SK-N-SH (cell line): ENCODE measurements at regions of chr1 and their contacts with region 1.

Region 1: GRCh38 chr1:153510984-153511410 is 24.8 kb downstream of the S100A6 start:
- DNase-seq: peak; percentile 89
- H3K4me3 ChIP-seq: no peak overlapping the region; a peak in 1 of 4 replicates
- H3K27ac ChIP-seq: peak overlapping the region in 1 of 2 experiments; percentile 9; a peak in 1 of 4 replicates
- H3K4me1 ChIP-seq: peaks cover 4 to 20% of the 10 kb centered on the region in 2 experiments; a peak in 3 of 4 replicates
- H3K27me3 ChIP-seq: no peaks in the 10 kb centered on the region
- CTCF ChIP-seq: peak; percentile 95
- EP300 ChIP-seq: no peak
- RAD21 ChIP-seq: peak; percentile 96

Region 2: GRCh38 chr1:153352523-153352922 is 158.5 kb before region 1 on chr1:
- CTCF ChIA-PET with region 1: interaction called, 10 read pairs
- POLR2A ChIA-PET with region 1: no interaction called
- DNase-seq: peak; percentile 77
- H3K4me3 ChIP-seq: no peak overlapping the region; a peak in 1 of 4 replicates
- H3K27ac ChIP-seq: no peak overlapping the region
- H3K4me1 ChIP-seq: no peaks in the 10 kb centered on the region
- H3K27me3 ChIP-seq: peaks cover 64% of the 10 kb centered on the region; the same call in 1 of the 2 replicates
- CTCF ChIP-seq: peak; percentile 93
- EP300 ChIP-seq: no peak
- RAD21 ChIP-seq: peak; percentile 92

Region 3: DNA sequence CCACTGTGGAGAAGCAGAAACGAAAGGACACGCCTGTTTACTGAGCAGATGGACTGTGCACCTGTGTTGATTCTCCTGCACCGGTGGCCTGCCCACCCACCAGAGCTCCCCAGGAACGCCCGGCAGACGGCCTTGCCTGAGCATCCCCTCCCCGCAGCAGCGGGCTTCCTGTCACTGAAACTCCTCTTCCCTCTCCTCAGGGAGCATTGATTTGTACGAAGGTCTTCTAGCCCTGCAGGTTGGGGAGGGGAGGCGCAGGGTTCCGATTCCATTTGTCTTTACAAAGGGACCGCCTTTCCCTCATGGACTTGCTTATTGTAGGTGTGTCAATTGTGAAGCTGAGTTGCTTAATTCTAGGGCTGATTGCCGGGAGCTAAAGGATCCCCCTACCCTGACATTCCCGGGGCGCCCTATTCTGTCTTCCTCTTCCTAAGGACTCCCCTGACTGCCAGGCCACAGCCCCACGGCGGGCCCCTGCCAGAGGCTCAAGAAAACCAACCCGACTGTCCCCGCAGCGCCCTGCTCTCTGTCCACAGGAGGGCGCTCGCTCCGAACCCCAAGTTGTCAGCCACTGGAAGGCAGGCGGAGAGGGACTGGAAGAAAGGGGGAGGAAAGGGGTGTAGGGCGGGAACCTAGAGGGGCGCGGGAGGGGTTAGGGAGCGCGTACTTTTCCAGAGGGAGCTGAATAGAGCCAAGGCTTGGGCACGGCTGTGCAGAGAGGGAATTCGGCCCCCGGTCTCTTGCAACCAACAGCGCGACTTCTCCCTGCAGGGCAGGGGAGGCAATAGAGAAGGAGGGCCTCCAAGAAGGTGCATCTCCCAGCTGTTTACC is 22.0 kb after region 1 on chr1:
- CTCF ChIA-PET with region 1: interaction called, 45 read pairs
- POLR2A ChIA-PET with region 1: no interaction called
- DNase-seq: no peak
- H3K4me3 ChIP-seq: peak overlapping the region in 1 of 2 experiments; percentile 79; a peak in 3 of 4 replicates
- H3K27ac ChIP-seq: peak overlapping the region; percentile 1 to 87; a peak in 3 of 4 replicates
- H3K4me1 ChIP-seq: peaks cover 24 to 31% of the 10 kb centered on the region in 2 experiments; a peak in 3 of 4 replicates
- H3K27me3 ChIP-seq: no peaks in the 10 kb centered on the region
- CTCF ChIP-seq: peak; percentile 62
- EP300 ChIP-seq: no peak
- RAD21 ChIP-seq: 0 out of 2 replicates have a peak, but pooled peaks have one; percentile 9

Region 4: DNA sequence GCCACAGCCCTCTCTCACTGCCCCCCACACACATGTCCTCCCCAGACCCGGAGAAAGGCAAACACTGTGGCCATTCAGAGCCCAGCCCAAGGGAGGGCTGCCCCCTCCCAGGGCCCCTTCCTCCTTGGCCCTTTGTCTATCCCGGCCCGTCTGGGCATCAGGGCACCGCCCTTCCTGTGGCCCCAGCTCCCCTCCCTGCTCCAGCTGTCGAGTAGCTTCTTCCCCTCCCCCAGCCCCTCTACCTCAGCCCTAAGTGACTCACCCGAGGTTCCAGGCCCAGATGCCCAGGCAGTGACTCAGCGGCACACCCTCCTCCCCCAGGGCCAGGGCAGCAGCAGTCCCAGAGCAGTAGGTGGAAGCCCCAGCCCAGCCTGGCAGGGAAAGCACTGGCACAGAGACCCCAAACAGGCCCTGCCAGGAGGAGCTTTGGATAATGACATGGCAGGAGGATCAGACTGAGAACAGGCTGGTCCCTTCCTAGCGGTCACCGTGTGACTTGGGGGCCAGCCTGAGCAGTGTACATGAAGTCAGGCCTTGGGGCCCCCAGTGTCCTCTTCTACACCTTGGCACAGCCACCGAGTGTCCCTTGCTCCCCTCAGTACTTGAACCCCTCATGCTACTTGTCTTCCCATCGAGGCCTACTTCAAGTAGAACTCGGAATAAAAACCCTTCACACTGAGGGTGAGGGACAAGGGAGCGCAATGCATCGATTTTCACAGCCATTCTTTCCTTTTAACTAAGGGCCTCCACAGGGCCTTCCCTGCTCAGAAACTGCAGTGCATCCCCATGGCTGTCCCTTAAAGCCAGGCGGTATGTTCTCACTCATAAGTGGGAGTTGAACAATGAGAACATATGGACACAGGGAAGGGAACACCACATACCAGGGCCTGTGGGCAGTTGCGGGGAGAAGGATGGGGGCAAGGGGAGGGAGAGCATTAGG is 55.7 kb after region 1 on chr1:
- CTCF ChIA-PET with region 1: interaction called, 283 read pairs
- POLR2A ChIA-PET with region 1: no interaction called
- DNase-seq: peak; percentile 73
- H3K4me3 ChIP-seq: no peak overlapping the region
- H3K27ac ChIP-seq: peak overlapping the region; percentile 95 to 99
- H3K4me1 ChIP-seq: peaks cover 33 to 43% of the 10 kb centered on the region in 2 experiments
- H3K27me3 ChIP-seq: no peaks in the 10 kb centered on the region
- CTCF ChIP-seq: no peak
- EP300 ChIP-seq: peak; percentile 24 to 99; a peak in 2 of 4 replicates
- RAD21 ChIP-seq: peak; percentile 6; the same call in 1 of the 2 replicates

Region 5: GRCh38 chr1:153608742-153609584 is 98.0 kb after region 1 on chr1:
- CTCF ChIA-PET with region 1: interaction called, 11 read pairs
- POLR2A ChIA-PET with region 1: no interaction called
- DNase-seq: no peak
- H3K4me3 ChIP-seq: peak overlapping the region; percentile 58 to 87
- H3K27ac ChIP-seq: peak overlapping the region; percentile 58 to 84
- H3K4me1 ChIP-seq: peaks cover 15 to 23% of the 10 kb centered on the region in 2 experiments; a peak in 3 of 4 replicates
- H3K27me3 ChIP-seq: no peaks in the 10 kb centered on the region
- CTCF ChIP-seq: no peak
- EP300 ChIP-seq: peak in 1 of 2 experiments; percentile 8; a peak in 1 of 4 replicates
- RAD21 ChIP-seq: no peak

Region 6: GRCh38 chr1:153633716-153634665 is 123.0 kb after region 1 on chr1 and contains the start of gene CHTOP:
- CTCF ChIA-PET with region 1: interaction called, 13 read pairs
- POLR2A ChIA-PET with region 1: interaction called, 3 read pairs
- DNase-seq: peak; percentile 94
- H3K4me3 ChIP-seq: peak within 1 kb of the TSS; percentile 91 to 97
- H3K27ac ChIP-seq: peak within 1 kb of the TSS; percentile 100
- H3K4me1 ChIP-seq: no peaks in the 10 kb centered on the region; a peak in 1 of 4 replicates
- H3K27me3 ChIP-seq: no peaks in the 10 kb centered on the region
- CTCF ChIP-seq: no peak
- EP300 ChIP-seq: no peak
- RAD21 ChIP-seq: no peak
- polyA plus RNA-seq, gene CHTOP: 76.7 and 84.9 TPM in 2 replicates